ENCODE measurements at regions of chr15 and their contacts with region 1.

Region 1: GRCh38 chr15:20645956-20646355 is 104.4 kb upstream of the GOLGA6L6 start:
- DNase-seq: peak in 4 of 9 donors; percentile 11 to 29 (median 20)
- ATAC-seq: peak; percentile 86
- H3K4me3 ChIP-seq: no peak overlapping the region
- H3K4me3 Mint-ChIP-seq: no peak overlapping the region
- H3K27ac ChIP-seq: no peak overlapping the region
- H3K27ac Mint-ChIP-seq: no peak overlapping the region
- H3K4me1 ChIP-seq: peaks cover 0 to 8% of the 10 kb centered on the region in 2 donors
- H3K4me1 Mint-ChIP-seq: peaks cover 0 to under 1% (median 0%) of the 10 kb centered on the region in 7 donors
- H3K27me3 ChIP-seq: no peaks in the 10 kb centered on the region
- H3K27me3 Mint-ChIP-seq: peaks cover 4 to 23% (median 18%) of the 10 kb centered on the region in 5 donors

Region 2: DNA sequence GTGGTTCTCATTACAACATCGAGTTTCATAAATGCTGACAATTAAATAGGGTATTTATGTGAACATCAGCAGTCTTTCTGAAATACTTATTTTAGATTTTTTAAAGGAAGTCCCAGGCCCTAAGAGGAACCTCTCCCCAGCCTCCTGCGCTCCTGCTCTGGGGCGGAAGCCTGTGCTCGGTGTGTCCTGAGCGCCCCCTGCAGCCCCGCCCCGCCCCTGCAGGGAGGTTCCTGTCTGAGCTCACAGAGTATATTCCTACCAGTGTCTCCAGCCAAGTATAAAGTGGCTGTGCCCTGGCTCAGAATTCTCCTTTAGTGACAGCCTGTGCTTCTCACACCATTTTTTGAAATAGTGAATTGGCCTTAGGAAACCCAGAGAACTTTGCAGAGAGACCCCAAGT is 672.2 kb before region 1 on chr15:
- CTCF ChIA-PET with region 1: no interaction called
- POLR2A ChIA-PET with region 1: no interaction called
- intact Hi-C with region 1: no loop called
- DNase-seq: no peak
- ATAC-seq: no peak
- H3K4me3 ChIP-seq: no peak overlapping the region
- H3K4me3 Mint-ChIP-seq: no peak overlapping the region
- H3K27ac ChIP-seq: no peak overlapping the region
- H3K27ac Mint-ChIP-seq: no peak overlapping the region
- H3K4me1 ChIP-seq: no peaks in the 10 kb centered on the region
- H3K4me1 Mint-ChIP-seq: peaks cover 0 to 13% (median 0%) of the 10 kb centered on the region in 7 donors
- H3K27me3 ChIP-seq: no peaks in the 10 kb centered on the region
- H3K27me3 Mint-ChIP-seq: peaks cover 0 to 4% (median 0%) of the 10 kb centered on the region in 5 donors

Region 3: DNA sequence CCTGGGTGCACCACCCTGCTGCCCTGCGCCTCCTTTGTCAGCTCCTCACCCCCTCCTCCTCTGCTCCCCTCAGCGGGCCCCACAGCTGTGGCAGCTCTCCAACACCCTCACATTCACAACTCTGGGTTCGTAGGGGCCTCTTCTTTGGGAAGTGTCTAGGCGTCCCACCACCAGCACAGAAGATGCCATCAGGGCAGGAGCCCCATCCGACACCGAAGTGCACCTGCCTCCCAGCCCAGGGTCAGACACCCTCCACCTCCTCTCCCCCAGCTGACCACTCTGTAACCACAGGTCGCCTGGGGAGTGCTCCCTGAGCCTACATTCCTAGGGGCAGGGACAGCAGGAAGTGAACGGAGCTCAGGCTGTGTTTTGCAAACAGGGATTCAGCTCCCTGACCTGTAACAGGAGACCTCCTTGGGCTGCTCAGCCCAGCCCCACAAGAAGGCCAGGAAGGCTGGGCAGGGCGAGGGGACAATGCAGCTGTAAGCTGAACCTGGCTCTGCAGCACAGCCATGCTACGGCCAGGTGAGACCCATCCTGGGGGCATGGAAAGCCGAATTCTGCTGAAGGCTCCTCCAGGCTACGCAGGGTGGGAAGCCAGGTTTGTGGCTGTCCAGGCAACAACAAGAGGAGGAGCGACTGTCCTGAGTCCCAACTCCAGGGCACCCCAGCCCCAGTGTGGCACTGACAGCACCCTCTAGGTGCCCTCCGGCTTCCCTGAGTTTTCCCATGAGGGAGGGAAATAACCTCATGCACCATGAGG is 373.4 kb before region 1 on chr15:
- CTCF ChIA-PET with region 1: no interaction called
- POLR2A ChIA-PET with region 1: no interaction called
- intact Hi-C with region 1: no loop called
- DNase-seq: no peak
- ATAC-seq: no peak
- H3K4me3 ChIP-seq: no peak overlapping the region
- H3K4me3 Mint-ChIP-seq: no peak overlapping the region
- H3K27ac ChIP-seq: no peak overlapping the region
- H3K27ac Mint-ChIP-seq: no peak overlapping the region
- H3K4me1 ChIP-seq: no peaks in the 10 kb centered on the region
- H3K4me1 Mint-ChIP-seq: no peaks in the 10 kb centered on the region
- H3K27me3 ChIP-seq: no peaks in the 10 kb centered on the region
- H3K27me3 Mint-ChIP-seq: no peaks in the 10 kb centered on the region

Region 4: DNA sequence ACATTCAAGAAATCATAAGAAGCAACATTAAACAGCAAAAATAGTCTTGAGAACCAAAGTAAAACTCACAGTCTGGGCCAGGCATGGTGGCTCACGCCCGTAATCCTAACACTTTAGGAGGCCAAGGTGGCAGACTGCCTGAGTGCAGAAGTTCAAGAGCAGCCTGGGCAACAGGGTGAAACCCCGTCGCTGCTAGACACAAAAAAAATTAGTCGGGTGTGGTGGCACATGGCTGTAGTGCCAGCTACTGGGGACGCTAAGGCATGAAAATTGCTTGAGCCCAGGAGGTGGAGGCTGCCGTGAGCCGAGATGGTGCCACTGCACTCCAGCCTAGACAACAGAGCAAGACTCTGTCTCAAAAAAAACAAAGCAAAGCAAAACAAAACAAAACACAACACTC is 13.3 kb after region 1 on chr15:
- CTCF ChIA-PET with region 1: no interaction called
- POLR2A ChIA-PET with region 1: no interaction called
- intact Hi-C with region 1: no loop called
- DNase-seq: no peak
- ATAC-seq: no peak
- H3K4me3 ChIP-seq: no peak overlapping the region
- H3K4me3 Mint-ChIP-seq: no peak overlapping the region
- H3K27ac ChIP-seq: no peak overlapping the region
- H3K27ac Mint-ChIP-seq: no peak overlapping the region
- H3K4me1 ChIP-seq: no peaks in the 10 kb centered on the region
- H3K4me1 Mint-ChIP-seq: no peaks in the 10 kb centered on the region
- H3K27me3 ChIP-seq: no peaks in the 10 kb centered on the region
- H3K27me3 Mint-ChIP-seq: no peaks in the 10 kb centered on the region

Region 5: GRCh38 chr15:20671675-20672074 is 25.7 kb after region 1 on chr15:
- CTCF ChIA-PET with region 1: no interaction called
- POLR2A ChIA-PET with region 1: no interaction called
- intact Hi-C with region 1: loop called in 1 of 2 experiments (anchors 2 kb)
- DNase-seq: no peak
- ATAC-seq: no peak
- H3K4me3 ChIP-seq: no peak overlapping the region
- H3K4me3 Mint-ChIP-seq: no peak overlapping the region
- H3K27ac ChIP-seq: no peak overlapping the region
- H3K27ac Mint-ChIP-seq: no peak overlapping the region
- H3K4me1 ChIP-seq: no peaks in the 10 kb centered on the region
- H3K4me1 Mint-ChIP-seq: no peaks in the 10 kb centered on the region
- H3K27me3 ChIP-seq: no peaks in the 10 kb centered on the region
- H3K27me3 Mint-ChIP-seq: peaks cover 0 to 5% (median 0%) of the 10 kb centered on the region in 5 donors